Caco-2 (cell line): ENCODE measurements at regions of chr4 and their contacts with region 1.

Region 1: GRCh38 chr4:154577324-154577723 is 13.2 kb downstream of the FGA start:
- DNase-seq: peak in 1 of 2 experiments; percentile 34
- H3K4me3 ChIP-seq: no peak overlapping the region
- H3K4me3 Mint-ChIP-seq: no peak overlapping the region
- H3K27ac Mint-ChIP-seq: no peak overlapping the region
- H3K4me1 ChIP-seq: 0 out of 2 replicates have a peak, but pooled peaks cover 5% of the 10 kb centered on the region
- H3K4me1 Mint-ChIP-seq: peaks cover 11% of the 10 kb centered on the region
- H3K27me3 ChIP-seq: no peaks in the 10 kb centered on the region
- H3K27me3 Mint-ChIP-seq: no peaks in the 10 kb centered on the region
- CTCF ChIP-seq: no peak

Region 2: DNA sequence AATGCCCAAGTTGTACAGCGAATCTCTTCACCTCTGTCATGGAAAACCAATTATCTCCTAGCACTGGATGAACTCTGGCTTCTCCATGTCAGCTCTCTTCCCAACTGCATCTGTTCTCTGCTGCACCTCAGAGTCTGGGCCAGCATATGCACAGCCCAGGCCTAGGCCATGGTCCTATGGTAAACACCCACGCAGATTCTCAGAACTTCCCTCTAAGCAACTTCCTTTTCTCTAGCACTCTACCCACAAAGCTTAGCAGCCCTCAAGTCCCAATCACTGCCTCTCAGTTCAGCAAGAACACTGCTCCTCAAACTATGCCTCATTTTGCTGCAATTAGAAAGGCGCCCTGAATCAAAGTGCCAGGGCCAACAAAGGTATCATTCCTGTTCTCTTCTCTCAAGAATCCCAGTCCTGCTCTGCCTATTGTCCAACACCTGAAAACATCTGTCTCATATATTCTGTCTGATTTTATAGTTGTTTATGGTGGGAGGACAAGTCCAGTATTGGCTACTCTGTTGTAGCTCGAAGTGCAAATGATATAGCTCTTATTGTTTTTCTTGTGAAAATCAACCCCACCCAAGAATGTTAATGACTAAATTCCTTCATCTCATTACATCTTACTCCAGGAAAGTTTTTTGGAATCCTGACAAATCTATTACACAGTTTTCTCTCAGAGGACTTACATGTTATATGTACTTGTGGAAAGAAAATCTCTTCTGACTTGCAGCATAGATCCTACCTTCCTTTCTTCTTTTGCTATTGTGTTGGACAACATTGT is 171.1 kb before region 1 on chr4:
- CTCF ChIA-PET with region 1: no interaction called
- POLR2A ChIA-PET with region 1: no interaction called
- intact Hi-C with region 1: no loop called
- DNase-seq: no peak
- H3K4me3 ChIP-seq: no peak overlapping the region
- H3K4me3 Mint-ChIP-seq: no peak overlapping the region
- H3K27ac Mint-ChIP-seq: no peak overlapping the region
- H3K4me1 ChIP-seq: no peaks in the 10 kb centered on the region
- H3K4me1 Mint-ChIP-seq: no peaks in the 10 kb centered on the region
- H3K27me3 ChIP-seq: no peaks in the 10 kb centered on the region
- H3K27me3 Mint-ChIP-seq: peaks cover 18% of the 10 kb centered on the region
- CTCF ChIP-seq: no peak

Region 3: GRCh38 chr4:154491341-154492271 is 85.7 kb before region 1 on chr4 and contains the start of gene DCHS2:
- CTCF ChIA-PET with region 1: no interaction called
- POLR2A ChIA-PET with region 1: no interaction called
- intact Hi-C with region 1: no loop called
- DNase-seq: peak; percentile 42 to 49
- H3K4me3 ChIP-seq: peak within 1 kb of the TSS; percentile 26
- H3K4me3 Mint-ChIP-seq: peak within 1 kb of the TSS; percentile 73
- H3K27ac Mint-ChIP-seq: no peak within 1 kb of the TSS
- H3K4me1 ChIP-seq: no peaks in the 10 kb centered on the region
- H3K4me1 Mint-ChIP-seq: no peaks in the 10 kb centered on the region
- H3K27me3 ChIP-seq: peaks cover 2% of the 10 kb centered on the region
- H3K27me3 Mint-ChIP-seq: peaks cover 20% of the 10 kb centered on the region
- CTCF ChIP-seq: no peak
- total RNA-seq, gene DCHS2: not detected in 2 replicates

Region 4: DNA sequence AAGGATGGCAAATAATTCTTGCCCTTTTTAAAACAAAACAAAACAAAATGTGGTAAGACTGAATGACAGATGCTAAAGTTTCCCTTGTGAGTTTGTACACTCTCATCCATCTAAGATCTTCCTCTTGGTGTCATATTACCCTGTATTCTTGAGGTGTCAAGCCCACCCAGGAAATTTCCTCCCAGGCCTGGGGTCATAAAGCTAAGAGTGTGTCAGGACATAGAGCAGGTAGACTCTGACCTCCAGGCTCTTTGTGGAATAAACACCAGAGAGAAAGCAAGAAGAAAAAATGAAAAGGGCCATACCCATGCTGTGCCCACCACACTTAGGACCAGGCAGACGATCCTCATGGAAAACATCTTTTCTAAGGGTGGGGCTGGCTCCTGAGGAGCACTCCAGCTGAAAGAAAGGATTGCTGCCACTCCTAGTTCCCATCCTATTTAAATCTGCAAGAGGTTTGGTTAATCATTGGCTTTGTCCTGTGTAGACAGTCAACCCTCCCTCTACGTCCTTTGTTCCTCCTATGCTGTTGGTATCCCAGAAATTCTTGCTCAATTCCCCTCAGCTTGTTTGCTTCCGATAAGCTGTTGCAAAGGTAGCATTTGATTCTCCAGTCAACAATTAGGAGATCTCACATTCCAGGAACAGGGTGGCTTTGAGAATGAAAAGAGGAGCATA is 13.1 kb after region 1 on chr4 and contains the start of gene FGA:
- CTCF ChIA-PET with region 1: interaction called, 3 read pairs
- POLR2A ChIA-PET with region 1: no interaction called
- intact Hi-C with region 1: loop called (anchors 1 kb)
- DNase-seq: peak; percentile 80 to 84
- H3K4me3 ChIP-seq: peak within 1 kb of the TSS; percentile 21
- H3K4me3 Mint-ChIP-seq: peak within 1 kb of the TSS; percentile 64
- H3K27ac Mint-ChIP-seq: peak within 1 kb of the TSS; percentile 36
- H3K4me1 ChIP-seq: peaks cover 33% of the 10 kb centered on the region
- H3K4me1 Mint-ChIP-seq: peaks cover 33% of the 10 kb centered on the region
- H3K27me3 ChIP-seq: no peaks in the 10 kb centered on the region
- H3K27me3 Mint-ChIP-seq: no peaks in the 10 kb centered on the region
- CTCF ChIP-seq: no peak
- total RNA-seq, gene FGA: 61.7 and 71.8 TPM in 2 replicates

Region 5: GRCh38 chr4:154595807-154596206 is 18.5 kb after region 1 on chr4:
- CTCF ChIA-PET with region 1: interaction called, 3 read pairs
- POLR2A ChIA-PET with region 1: no interaction called
- intact Hi-C with region 1: loop called (anchors 1 kb)
- DNase-seq: peak; percentile 70 to 79
- H3K4me3 ChIP-seq: no peak overlapping the region
- H3K4me3 Mint-ChIP-seq: no peak overlapping the region
- H3K27ac Mint-ChIP-seq: no peak overlapping the region
- H3K4me1 ChIP-seq: peaks cover 45% of the 10 kb centered on the region
- H3K4me1 Mint-ChIP-seq: peaks cover 57% of the 10 kb centered on the region
- H3K27me3 ChIP-seq: no peaks in the 10 kb centered on the region
- H3K27me3 Mint-ChIP-seq: no peaks in the 10 kb centered on the region
- CTCF ChIP-seq: no peak